Heart left ventricle (tissue), 16 donors: ENCODE measurements at regions of chr9 and their contacts with region 1.

Region 1: DNA sequence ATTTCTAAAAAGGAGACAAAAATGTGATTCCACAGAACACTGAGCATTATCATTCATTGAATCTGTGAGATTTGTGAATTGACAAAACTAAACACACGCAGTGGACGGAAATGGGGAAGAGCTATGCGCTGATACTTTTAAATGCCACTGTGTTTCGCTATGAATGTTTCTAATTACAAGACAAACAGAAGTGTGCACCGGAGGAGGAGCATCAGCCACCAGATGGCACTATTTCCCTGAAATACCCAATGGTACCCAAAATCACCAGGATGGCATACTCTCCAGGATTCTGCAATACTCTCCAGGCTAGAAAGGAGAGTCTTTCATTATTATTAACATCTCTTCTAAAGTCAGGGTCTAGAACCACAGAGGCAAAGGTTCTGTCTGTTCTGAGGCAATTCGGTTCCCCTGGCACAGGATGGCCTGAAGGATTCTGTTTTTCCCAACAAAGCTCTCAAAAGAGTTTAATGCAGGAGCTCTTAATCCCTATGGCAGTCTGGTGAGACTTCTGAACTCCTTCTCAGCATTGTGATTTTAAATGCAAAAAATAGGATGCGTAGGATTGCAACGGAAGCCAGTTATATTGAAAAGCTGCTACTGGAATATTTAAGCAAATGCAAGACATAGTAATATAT is 13.8 kb upstream of the PUM3 start:
- DNase-seq: peak in 4 of 5 donors; percentile 30 to 51 (median 36)
- ATAC-seq: peak in 3 of 4 donors; percentile 44 to 78 (median 61)
- H3K4me3 ChIP-seq: no peak overlapping the region
- H3K27ac ChIP-seq: no peak overlapping the region
- H3K4me1 ChIP-seq: no peaks in the 10 kb centered on the region
- H3K27me3 ChIP-seq: peaks cover 0 to 10% (median 0%) of the 10 kb centered on the region in 9 donors
- CTCF ChIP-seq: peak; percentile 65 to 86 (median 78)
- POLR2A ChIP-seq: no peak

Region 2: DNA sequence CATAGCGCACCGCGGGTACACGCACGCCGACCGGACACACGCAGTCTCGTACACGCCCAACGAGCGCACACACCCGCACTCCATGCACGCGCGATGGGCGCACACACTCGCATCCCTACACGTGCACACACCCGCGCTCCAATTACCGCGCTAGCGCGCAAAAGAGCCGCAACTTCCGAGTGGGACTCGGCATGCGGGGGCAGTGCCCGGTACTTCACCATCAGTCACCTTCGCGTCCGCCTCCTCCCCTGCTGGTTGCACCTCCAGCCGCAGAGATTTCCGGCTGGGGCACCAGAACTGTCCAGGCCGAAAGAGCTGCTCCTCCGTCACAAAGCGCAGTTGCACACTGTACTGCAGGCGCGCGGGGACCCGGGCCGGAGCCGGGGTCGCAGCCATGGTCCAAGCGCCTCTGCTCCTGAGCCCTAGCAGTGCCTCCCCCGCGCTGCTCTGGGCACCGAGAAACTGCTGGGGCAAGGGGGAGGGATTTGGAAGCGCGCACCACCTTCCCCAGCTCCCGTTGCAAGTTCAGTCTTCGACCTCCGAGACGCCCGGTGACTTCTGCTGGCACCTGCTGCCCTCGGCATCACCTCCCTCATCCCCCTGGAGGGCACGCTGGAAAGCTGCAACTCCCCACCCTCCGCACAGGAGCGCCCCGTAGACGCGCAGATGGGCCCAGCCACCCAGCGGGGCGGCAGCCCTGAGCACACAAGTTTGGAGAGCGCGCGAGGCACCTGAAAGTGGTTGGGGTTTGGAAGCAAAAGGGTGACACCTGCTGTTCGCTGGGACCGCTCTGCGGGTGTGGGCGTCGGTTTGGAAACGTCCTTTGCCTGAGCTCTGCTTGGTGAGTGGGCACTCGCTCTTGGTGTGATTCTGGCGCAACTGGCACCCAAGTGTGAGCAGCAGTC is 323.6 kb after region 1 on chr9:
- intact Hi-C with region 1: loop called in 2 of 10 experiments (anchors 5 kb)
- DNase-seq: peak in 1 of 5 donors; percentile 60
- ATAC-seq: peak in 3 of 4 donors; percentile 22 to 58 (median 42)
- H3K4me3 ChIP-seq: peak overlapping the region in 7 of 12 donors; percentile 6 to 32 (median 21)
- H3K27ac ChIP-seq: no peak overlapping the region
- H3K4me1 ChIP-seq: peaks cover 0 to 10% (median 2%) of the 10 kb centered on the region in 12 donors
- H3K27me3 ChIP-seq: peaks cover 6 to 50% (median 29%) of the 10 kb centered on the region in 9 donors
- CTCF ChIP-seq: peak in 7 of 12 donors; percentile 5 to 37 (median 13)
- POLR2A ChIP-seq: no peak

Region 3: GRCh38 chr9:4366591-4367330 is 1509.1 kb after region 1 on chr9:
- intact Hi-C with region 1: loop called in 6 of 10 experiments (anchors 5 to 10 kb)
- DNase-seq: peak in 1 of 5 donors; percentile 7
- ATAC-seq: peak in 1 of 4 donors; percentile 9
- H3K4me3 ChIP-seq: no peak overlapping the region
- H3K27ac ChIP-seq: no peak overlapping the region
- H3K4me1 ChIP-seq: no peaks in the 10 kb centered on the region
- H3K27me3 ChIP-seq: no peaks in the 10 kb centered on the region
- CTCF ChIP-seq: peak; percentile 37 to 63 (median 54)
- POLR2A ChIP-seq: no peak

Region 4: DNA sequence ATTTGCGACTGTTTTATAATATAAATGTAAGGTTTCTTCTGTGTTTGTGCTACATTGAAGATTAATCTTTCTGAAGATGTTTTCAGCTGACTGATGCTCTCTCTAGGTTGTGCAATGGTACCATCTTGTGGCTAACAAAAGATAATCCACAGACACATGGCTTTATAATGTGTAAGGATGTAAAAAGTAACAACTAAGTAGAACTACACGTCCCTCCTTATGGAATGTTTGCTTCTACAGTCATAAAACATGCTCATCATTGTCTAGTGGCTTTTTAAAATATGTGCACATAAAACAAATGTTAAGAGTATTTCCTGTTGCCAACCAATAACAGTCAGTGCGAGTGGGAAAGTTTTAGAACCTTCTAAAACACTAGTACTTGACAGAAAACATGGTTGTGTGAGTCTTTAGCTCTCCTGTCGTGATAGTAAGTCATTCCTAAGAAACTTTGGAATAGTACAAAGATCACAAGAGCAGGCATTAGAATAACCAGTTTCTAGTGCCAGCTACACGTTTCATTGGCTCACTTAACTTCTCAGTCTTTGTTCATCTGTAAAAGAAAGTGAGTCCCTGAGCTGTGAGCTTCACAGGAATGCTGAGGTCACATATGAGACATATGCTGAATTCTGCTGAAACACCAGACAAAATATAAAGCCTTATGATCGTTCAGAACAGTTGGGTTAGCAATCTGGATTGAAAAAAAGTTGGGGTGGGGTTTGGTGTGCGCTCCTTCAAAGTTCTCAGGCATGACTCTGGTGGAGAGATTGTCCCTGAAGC is 1517.9 kb after region 1 on chr9:
- intact Hi-C with region 1: loop called in 8 of 10 experiments (anchors 2 to 10 kb)
- DNase-seq: no peak
- ATAC-seq: peak in 3 of 4 donors; percentile 39 to 64 (median 41)
- H3K4me3 ChIP-seq: no peak overlapping the region
- H3K27ac ChIP-seq: no peak overlapping the region
- H3K4me1 ChIP-seq: no peaks in the 10 kb centered on the region
- H3K27me3 ChIP-seq: peaks cover 0 to 22% (median 0%) of the 10 kb centered on the region in 9 donors
- CTCF ChIP-seq: peak; percentile 19 to 66 (median 40)
- POLR2A ChIP-seq: no peak